Activated CD4-positive, alpha-beta T cell treated with anti-CD3 and anti-CD28 coated beads for 36 hours (primary cell): ENCODE measurements at regions of chr17 and their contacts with region 1.

Region 1: GRCh38 chr17:78250891-78251794 is 19.7 kb downstream of the TMEM235 start:
- DNase-seq: peak; percentile 94
- ATAC-seq: peak; percentile 70
- H3K4me3 Mint-ChIP-seq: peak overlapping the region; percentile 41
- H3K27ac Mint-ChIP-seq: peak overlapping the region; percentile 63
- H3K4me1 Mint-ChIP-seq: peaks cover 42% of the 10 kb centered on the region
- H3K27me3 Mint-ChIP-seq: no peaks in the 10 kb centered on the region

Region 2: DNA sequence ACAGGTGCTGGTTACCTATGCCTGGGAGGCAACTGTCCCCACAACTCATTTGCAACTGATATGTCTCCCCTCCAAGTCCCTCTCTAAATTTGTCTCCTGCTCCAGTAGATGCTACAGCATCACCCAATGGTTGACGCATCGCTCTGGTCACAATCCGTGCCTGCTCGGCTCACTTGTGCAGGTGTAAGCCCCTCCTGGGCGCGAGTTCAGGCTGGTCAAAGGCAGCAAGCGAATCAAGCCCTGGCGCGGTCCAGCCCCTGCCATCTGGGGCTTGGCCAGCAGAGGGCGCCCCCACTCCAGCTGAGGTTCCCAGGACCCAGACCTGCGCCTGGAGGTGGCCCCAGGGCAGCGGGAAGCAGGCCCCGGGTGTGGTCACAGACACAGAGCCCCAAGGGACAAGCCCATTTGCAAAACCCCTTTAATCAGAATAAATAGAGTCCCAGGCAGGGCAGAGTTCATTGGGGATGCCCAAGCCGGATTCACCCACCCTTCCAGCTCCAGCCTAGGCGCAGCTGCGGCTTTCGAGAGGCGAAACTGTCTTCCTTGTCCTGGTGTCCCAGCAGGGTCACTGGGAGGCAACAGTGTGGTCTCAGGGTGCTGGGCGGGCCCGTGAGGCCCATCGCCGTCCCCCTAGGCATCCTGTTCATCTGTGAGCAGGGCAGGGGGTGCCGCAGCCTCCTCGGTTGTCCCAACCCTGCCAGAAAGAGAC is 138.5 kb before region 1 on chr17:
- CTCF ChIA-PET with region 1: interaction called, 4 read pairs
- POLR2A ChIA-PET with region 1: no interaction called
- intact Hi-C with region 1: loop called in 1 of 2 experiments (anchors 1 kb)
- DNase-seq: peak; percentile 89
- ATAC-seq: peak; percentile 60
- H3K4me3 Mint-ChIP-seq: no peak overlapping the region
- H3K27ac Mint-ChIP-seq: peak overlapping the region; percentile 83
- H3K4me1 Mint-ChIP-seq: peaks cover 35% of the 10 kb centered on the region
- H3K27me3 Mint-ChIP-seq: no peaks in the 10 kb centered on the region

Region 3: DNA sequence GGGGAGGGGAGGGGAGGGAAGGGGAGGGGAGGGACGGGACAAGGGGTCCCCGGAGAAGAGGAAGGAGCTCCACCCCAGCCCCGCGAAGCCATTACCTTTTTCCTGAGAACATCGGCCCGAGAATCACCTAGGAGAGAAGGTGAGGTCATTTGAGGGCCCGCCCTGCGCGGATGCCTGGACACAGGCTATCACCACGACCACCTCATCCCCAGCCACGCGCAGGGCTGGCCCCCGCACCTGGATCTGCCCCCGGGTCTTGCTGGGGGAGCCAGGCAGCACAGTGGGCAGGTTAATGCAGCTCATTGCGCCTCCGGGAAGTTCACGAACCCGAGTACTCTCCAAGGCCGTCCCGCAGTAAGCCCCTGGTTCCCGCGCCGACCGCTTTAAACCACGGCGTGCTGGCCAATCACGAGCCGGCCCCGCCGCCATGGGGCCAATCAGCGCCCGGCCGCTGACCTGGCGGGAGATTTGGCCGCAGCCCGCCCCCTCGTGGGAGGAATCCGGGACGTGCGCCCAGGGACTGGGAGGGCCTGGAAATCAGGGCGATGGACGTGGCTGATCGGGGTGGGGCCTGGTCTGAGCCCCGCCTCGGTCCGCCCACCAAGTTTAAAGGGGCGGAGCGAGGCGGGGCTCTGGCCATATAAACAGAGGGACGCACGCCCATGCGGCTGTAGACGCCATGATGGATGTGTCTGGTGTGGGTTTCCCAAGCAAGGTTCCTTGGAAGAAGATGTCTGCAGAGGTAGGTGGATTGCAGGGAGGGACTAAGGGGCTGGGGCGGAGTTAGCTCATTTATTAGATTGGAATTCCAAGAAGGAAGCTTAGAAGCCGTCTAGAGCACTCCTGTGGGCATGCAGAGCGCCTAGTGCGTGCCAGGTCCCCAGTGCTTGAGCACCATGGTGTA is 64.2 kb before region 1 on chr17 and contains the starts of genes AFMID and TK1:
- CTCF ChIA-PET with region 1: interaction called, 10 read pairs
- POLR2A ChIA-PET with region 1: no interaction called
- intact Hi-C with region 1: loop called in 1 of 2 experiments (anchors 1 kb)
- DNase-seq: peak; percentile 98
- ATAC-seq: peak; percentile 96
- H3K4me3 Mint-ChIP-seq: peak within 1 kb of the TSS; percentile 78
- H3K27ac Mint-ChIP-seq: peak within 1 kb of the TSS; percentile 73
- H3K4me1 Mint-ChIP-seq: peaks cover 26% of the 10 kb centered on the region
- H3K27me3 Mint-ChIP-seq: no peaks in the 10 kb centered on the region
- total RNA-seq, gene AFMID: 26.3 to 26.7 TPM
- total RNA-seq, gene TK1: 157 to 195 TPM

Region 4: GRCh38 chr17:78226749-78227399 is 24.3 kb before region 1 on chr17:
- CTCF ChIA-PET with region 1: interaction called, 14 read pairs
- POLR2A ChIA-PET with region 1: no interaction called
- intact Hi-C with region 1: no loop called
- DNase-seq: peak; percentile 32
- ATAC-seq: peak; percentile 48
- H3K4me3 Mint-ChIP-seq: no peak overlapping the region
- H3K27ac Mint-ChIP-seq: no peak overlapping the region
- H3K4me1 Mint-ChIP-seq: peaks cover 7% of the 10 kb centered on the region
- H3K27me3 Mint-ChIP-seq: peaks cover 12% of the 10 kb centered on the region

Region 5: DNA sequence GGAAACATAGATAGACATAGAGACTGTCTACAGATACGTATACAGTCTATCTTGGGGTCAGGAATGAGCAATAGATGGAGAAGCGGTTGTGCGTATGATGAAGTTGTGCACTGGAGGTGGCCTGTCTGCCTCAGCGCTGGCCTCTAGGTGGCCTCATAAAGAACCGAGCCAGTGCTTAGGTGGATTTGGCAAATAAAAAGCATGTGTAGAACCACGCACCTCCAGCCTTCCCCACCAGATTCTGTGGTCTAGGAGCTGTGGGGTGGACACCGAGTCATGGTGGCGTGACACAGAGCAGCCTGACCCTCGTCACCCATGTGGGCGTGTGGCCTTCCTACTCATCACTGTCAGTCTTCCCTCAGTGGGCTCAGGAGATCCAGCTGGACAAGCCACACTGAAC is 161.3 kb after region 1 on chr17:
- CTCF ChIA-PET with region 1: interaction called, 4 read pairs
- POLR2A ChIA-PET with region 1: interaction called, 4 read pairs
- intact Hi-C with region 1: loop called in 1 of 2 experiments (anchors 2 kb)
- DNase-seq: peak; percentile 76
- ATAC-seq: peak; percentile 27
- H3K4me3 Mint-ChIP-seq: peak overlapping the region; percentile 9
- H3K27ac Mint-ChIP-seq: peak overlapping the region; percentile 92
- H3K4me1 Mint-ChIP-seq: peaks cover 78% of the 10 kb centered on the region
- H3K27me3 Mint-ChIP-seq: no peaks in the 10 kb centered on the region

Region 6: GRCh38 chr17:78442648-78443128 is 191.5 kb after region 1 on chr17:
- CTCF ChIA-PET with region 1: interaction called, 10 read pairs
- POLR2A ChIA-PET with region 1: no interaction called
- intact Hi-C with region 1: no loop called
- DNase-seq: no peak
- ATAC-seq: no peak
- H3K4me3 Mint-ChIP-seq: no peak overlapping the region
- H3K27ac Mint-ChIP-seq: no peak overlapping the region
- H3K4me1 Mint-ChIP-seq: no peaks in the 10 kb centered on the region
- H3K27me3 Mint-ChIP-seq: no peaks in the 10 kb centered on the region